ENCODE measurements at regions of chr20 and their contacts with region 1.

Region 1: GRCh38 chr20:34955232-34956040 is at the starts of genes GSS and MYH7B:
- DNase-seq: peak; percentile 90 to 99 (median 96)
- ATAC-seq: peak; percentile 95
- H3K4me3 ChIP-seq: peak within 1 kb of the TSS; percentile 74 to 83
- H3K4me3 Mint-ChIP-seq: peak within 1 kb of the TSS; percentile 99
- H3K27ac ChIP-seq: peak within 1 kb of the TSS; percentile 64 to 84
- H3K27ac Mint-ChIP-seq: peak within 1 kb of the TSS; percentile 95
- H3K4me1 ChIP-seq: peaks cover 12% of the 10 kb centered on the region
- H3K4me1 Mint-ChIP-seq: peaks cover 32% of the 10 kb centered on the region
- H3K27me3 ChIP-seq: no peaks in the 10 kb centered on the region
- H3K27me3 Mint-ChIP-seq: no peaks in the 10 kb centered on the region
- CTCF ChIP-seq: no peak
- total RNA-seq, gene GSS: 23.6 to 24.3 TPM
- total RNA-seq, gene MYH7B: 0.19 to 0.54 TPM

Region 2: GRCh38 chr20:34363062-34363464 is 592.4 kb before region 1 on chr20 and contains the start of gene ITCH:
- CTCF ChIA-PET with region 1: no interaction called
- POLR2A ChIA-PET with region 1: no interaction called
- intact Hi-C with region 1: loop called in 1 of 2 experiments (anchors 5 kb)
- DNase-seq: peak; percentile 80 to 96 (median 93)
- ATAC-seq: peak; percentile 99
- H3K4me3 ChIP-seq: peak within 1 kb of the TSS; percentile 92 to 93
- H3K4me3 Mint-ChIP-seq: peak within 1 kb of the TSS; percentile 99
- H3K27ac ChIP-seq: peak within 1 kb of the TSS; percentile 86 to 91
- H3K27ac Mint-ChIP-seq: peak within 1 kb of the TSS; percentile 99
- H3K4me1 ChIP-seq: peaks cover 40% of the 10 kb centered on the region
- H3K4me1 Mint-ChIP-seq: peaks cover 45% of the 10 kb centered on the region
- H3K27me3 ChIP-seq: no peaks in the 10 kb centered on the region
- H3K27me3 Mint-ChIP-seq: no peaks in the 10 kb centered on the region
- CTCF ChIP-seq: no peak
- total RNA-seq, gene ITCH: 50.4 to 55.2 TPM

Region 3: GRCh38 chr20:34825530-34826362 is 129.7 kb before region 1 on chr20 and contains the start of gene NCOA6:
- CTCF ChIA-PET with region 1: no interaction called
- POLR2A ChIA-PET with region 1: no interaction called
- intact Hi-C with region 1: loop called (anchors 2 kb)
- DNase-seq: peak; percentile 76 to 92 (median 85)
- ATAC-seq: peak; percentile 71
- H3K4me3 ChIP-seq: peak within 1 kb of the TSS; percentile 87 to 89
- H3K4me3 Mint-ChIP-seq: peak within 1 kb of the TSS; percentile 98
- H3K27ac ChIP-seq: peak within 1 kb of the TSS; percentile 38 to 67
- H3K27ac Mint-ChIP-seq: peak within 1 kb of the TSS; percentile 97
- H3K4me1 ChIP-seq: peaks cover 21% of the 10 kb centered on the region
- H3K4me1 Mint-ChIP-seq: peaks cover 41% of the 10 kb centered on the region
- H3K27me3 ChIP-seq: no peaks in the 10 kb centered on the region
- H3K27me3 Mint-ChIP-seq: peaks cover 2% of the 10 kb centered on the region
- CTCF ChIP-seq: no peak
- total RNA-seq, gene NCOA6: 13.0 to 13.5 TPM

Region 4: DNA sequence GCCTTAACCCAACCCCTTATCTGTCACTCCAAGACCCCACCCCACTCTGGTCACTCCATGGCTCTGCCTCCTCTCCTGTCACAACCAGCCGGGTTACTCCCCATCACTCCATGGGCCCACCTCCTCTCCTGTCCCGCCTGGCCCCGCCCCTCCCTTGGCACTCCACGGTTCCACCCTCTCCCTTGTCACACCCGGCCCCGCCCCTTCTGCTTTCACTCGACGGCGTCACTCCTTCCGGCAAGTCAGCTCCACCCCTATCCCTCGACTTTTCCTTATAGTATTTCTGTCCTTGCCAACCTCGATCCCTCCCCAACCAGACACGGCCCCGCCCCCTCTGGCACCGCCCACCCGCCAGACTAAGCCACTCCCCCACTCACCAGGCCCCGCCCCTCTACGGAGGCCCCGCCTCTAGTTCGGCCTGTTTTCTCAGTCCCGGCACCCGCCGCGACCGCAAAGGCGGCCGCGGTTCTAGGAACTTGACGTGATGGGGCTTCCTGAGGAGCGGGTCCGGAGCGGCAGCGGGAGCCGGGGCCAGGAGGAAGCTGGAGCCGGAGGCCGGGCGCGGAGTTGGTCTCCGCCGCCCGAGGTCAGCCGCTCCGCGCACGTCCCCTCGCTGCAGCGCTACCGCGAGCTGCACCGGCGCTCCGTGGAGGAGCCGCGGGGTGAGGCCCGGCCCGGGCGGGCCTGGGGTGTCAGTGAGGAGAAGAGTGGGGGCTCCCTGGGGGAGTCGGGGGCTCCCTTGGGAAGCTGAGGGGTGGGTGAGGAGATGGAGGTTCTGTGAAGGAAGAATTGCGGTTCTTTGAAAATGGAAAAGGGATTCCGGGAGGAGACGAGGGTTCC is 79.1 kb before region 1 on chr20 and contains the start of gene ACSS2:
- CTCF ChIA-PET with region 1: interaction called, 15 read pairs
- POLR2A ChIA-PET with region 1: interaction called, 9 read pairs
- intact Hi-C with region 1: loop called (anchors 1 kb)
- DNase-seq: peak; percentile 85 to 97 (median 91)
- ATAC-seq: peak; percentile 85
- H3K4me3 ChIP-seq: peak within 1 kb of the TSS; percentile 55 to 68
- H3K4me3 Mint-ChIP-seq: peak within 1 kb of the TSS; percentile 89
- H3K27ac ChIP-seq: peak within 1 kb of the TSS in 1 of 2 experiments; percentile 24
- H3K27ac Mint-ChIP-seq: peak within 1 kb of the TSS; percentile 57
- H3K4me1 ChIP-seq: peaks cover 46% of the 10 kb centered on the region
- H3K4me1 Mint-ChIP-seq: peaks cover 54% of the 10 kb centered on the region
- H3K27me3 ChIP-seq: no peaks in the 10 kb centered on the region
- H3K27me3 Mint-ChIP-seq: no peaks in the 10 kb centered on the region
- CTCF ChIP-seq: no peak
- total RNA-seq, gene ACSS2: 6.5 to 12.7 TPM

Measured in CD8-positive, alpha-beta T cell (primary cell).